ENCODE measurements at regions of chr19 and their contacts with region 1.

Region 1: GRCh38 chr19:55088543-55089341 is 13.1 kb downstream of the EPS8L1 start:
- DNase-seq: peak; percentile 71 to 81
- ATAC-seq: peak; percentile 52 to 79
- H3K4me3 ChIP-seq: no peak overlapping the region
- H3K27ac ChIP-seq: no peak overlapping the region
- H3K4me1 ChIP-seq: no peaks in the 10 kb centered on the region
- CTCF ChIP-seq: peak; percentile 93
- EP300 ChIP-seq: no peak
- POLR2A ChIP-seq: no peak
- RAD21 ChIP-seq: peak; percentile 33 to 51; a peak in 3 of 5 replicates

Region 2: DNA sequence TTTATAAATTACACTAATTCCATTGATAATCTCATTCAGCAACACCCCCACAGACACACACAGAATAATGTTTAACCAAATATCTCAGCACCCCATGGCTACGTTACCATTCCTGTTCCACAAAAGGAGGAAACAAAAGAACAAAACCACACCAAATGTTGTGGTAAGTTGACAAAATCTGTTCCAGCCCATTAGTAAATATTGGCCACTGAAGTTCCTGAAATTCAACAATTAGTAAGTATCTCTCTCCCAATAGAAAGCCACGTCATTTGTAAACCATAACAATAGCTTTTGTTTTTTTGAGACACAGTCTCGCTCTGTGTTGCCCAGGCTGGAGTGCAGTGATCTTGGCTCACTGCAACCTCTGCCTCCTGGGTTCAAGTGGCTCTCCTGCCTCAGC is 217.0 kb before region 1 on chr19:
- CTCF ChIA-PET with region 1: no interaction called
- POLR2A ChIA-PET with region 1: no interaction called
- DNase-seq: no peak
- ATAC-seq: no peak
- H3K4me3 ChIP-seq: no peak overlapping the region
- H3K27ac ChIP-seq: no peak overlapping the region
- H3K4me1 ChIP-seq: no peaks in the 10 kb centered on the region
- CTCF ChIP-seq: no peak
- EP300 ChIP-seq: no peak
- POLR2A ChIP-seq: no peak
- RAD21 ChIP-seq: no peak

Region 3: DNA sequence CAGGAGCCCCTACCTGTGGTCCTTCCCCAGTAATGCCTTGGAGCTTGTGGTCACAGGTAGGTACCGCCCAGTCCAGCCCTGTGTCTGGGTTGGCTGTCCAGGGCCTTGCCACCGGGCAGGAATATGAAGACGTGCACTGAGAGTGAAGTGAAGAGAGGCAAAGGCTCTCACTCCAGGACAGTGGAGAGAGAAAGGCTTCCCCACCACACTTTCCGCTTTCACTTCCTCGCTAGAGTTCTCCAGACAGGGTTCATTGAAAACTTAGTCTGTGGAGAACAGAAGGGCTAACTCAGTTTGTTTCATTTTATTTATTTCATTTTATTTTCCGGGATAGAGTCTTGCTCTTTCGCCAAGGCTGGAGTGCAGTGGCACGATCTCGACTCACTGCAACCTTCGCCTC is 200.5 kb before region 1 on chr19:
- CTCF ChIA-PET with region 1: no interaction called
- POLR2A ChIA-PET with region 1: no interaction called
- DNase-seq: no peak
- ATAC-seq: no peak
- H3K4me3 ChIP-seq: no peak overlapping the region
- H3K27ac ChIP-seq: no peak overlapping the region
- H3K4me1 ChIP-seq: peaks cover 2% of the 10 kb centered on the region; the same call in 1 of the 3 replicates
- CTCF ChIP-seq: no peak
- EP300 ChIP-seq: no peak
- POLR2A ChIP-seq: no peak
- RAD21 ChIP-seq: no peak

Region 4: DNA sequence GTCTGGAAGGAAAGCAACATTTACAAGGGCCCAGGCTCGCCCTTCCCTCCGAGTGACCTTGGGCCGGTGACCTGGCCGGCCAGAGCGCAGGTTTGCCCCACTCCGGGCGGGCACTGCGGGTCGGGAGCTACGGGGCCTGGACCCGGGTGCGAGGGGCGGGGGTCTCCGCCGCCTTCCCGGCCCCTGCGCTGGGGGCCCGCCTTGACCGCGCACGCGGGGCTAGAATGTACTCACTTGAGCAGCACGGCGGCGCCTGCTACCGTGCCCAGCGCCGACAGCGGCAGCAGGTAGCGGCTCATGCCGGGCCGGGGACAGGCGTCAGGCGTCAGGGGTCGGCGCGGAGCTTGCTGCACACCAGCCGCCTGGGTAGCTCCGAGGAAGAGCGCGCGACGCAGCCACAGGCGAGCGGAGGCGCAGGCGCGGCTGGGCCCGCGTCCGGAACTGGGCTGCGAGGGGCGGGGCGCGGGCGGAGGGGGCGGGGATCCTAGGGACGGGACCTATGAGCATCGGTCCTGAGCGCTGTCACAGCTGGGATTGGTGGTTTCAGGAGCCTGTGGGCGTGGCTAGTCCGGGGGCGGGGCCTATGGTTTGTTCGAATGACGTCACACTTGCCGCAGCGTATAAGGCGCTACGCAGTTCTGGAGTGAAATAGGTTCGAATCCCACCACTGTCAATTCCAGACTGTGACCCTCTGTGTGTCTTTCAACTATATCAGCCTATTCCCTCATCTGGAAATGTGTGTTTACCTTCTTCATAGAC is 25.8 kb before region 1 on chr19 and contains the start of gene RDH13:
- CTCF ChIA-PET with region 1: interaction called, 18 read pairs
- POLR2A ChIA-PET with region 1: interaction called, 3 read pairs
- DNase-seq: peak; percentile 97 to 99
- ATAC-seq: peak; percentile 95 to 99
- H3K4me3 ChIP-seq: peak within 1 kb of the TSS; percentile 95
- H3K27ac ChIP-seq: peak within 1 kb of the TSS; percentile 80 to 89
- H3K4me1 ChIP-seq: peaks cover 7% of the 10 kb centered on the region; the same call in 2 of the 3 replicates
- CTCF ChIP-seq: no peak
- EP300 ChIP-seq: no peak
- POLR2A ChIP-seq: peak; percentile 81
- RAD21 ChIP-seq: no peak
- polyA plus RNA-seq, gene RDH13: 10.6 and 10.7 TPM in 2 replicates

Region 5: GRCh38 chr19:55068950-55069855 is 19.5 kb before region 1 on chr19:
- CTCF ChIA-PET with region 1: interaction called, 77 read pairs
- POLR2A ChIA-PET with region 1: no interaction called
- DNase-seq: peak; percentile 82 to 84
- ATAC-seq: peak; percentile 78
- H3K4me3 ChIP-seq: peak overlapping the region; percentile 43
- H3K27ac ChIP-seq: peak overlapping the region; percentile 50 to 74
- H3K4me1 ChIP-seq: peaks cover 27% of the 10 kb centered on the region
- CTCF ChIP-seq: no peak
- EP300 ChIP-seq: no peak
- POLR2A ChIP-seq: no peak
- RAD21 ChIP-seq: no peak

Region 6: GRCh38 chr19:55099533-55100506 is 11.1 kb after region 1 on chr19:
- CTCF ChIA-PET with region 1: interaction called, 110 read pairs
- POLR2A ChIA-PET with region 1: no interaction called
- DNase-seq: no peak
- ATAC-seq: peak in 1 of 2 experiments; percentile 49; a peak in 3 of 6 replicates
- H3K4me3 ChIP-seq: no peak overlapping the region
- H3K27ac ChIP-seq: no peak overlapping the region
- H3K4me1 ChIP-seq: no peaks in the 10 kb centered on the region
- CTCF ChIP-seq: no peak
- EP300 ChIP-seq: no peak
- POLR2A ChIP-seq: no peak
- RAD21 ChIP-seq: peak; percentile 27 to 55; a peak in 3 of 5 replicates

Region 7: DNA sequence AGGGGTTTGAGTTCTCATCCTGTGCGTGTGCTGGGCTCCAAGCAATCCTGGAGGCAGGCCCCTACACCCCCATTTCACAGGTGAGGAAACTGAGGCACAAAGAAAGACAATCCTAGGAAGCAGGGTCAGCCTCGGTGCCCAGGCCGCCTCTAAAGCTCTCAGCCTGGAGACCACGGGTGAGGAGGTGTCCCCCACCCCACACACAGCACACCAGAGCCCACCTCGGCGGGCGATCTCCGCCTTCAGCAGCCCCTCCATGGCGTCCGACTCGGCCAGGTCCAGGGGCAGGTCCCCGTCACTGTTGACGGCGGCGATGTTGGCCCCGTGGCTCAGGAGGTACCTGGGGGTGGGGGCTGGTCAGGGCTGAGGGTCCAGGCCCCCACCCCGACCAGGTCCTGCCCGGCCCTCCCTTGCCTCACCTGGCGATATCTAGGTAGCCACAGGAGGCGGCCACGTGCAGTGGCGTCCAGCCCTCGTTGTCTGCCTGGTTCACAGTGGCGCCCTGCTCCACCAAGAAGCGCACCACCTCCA is 23.6 kb after region 1 on chr19:
- CTCF ChIA-PET with region 1: interaction called, 110 read pairs
- POLR2A ChIA-PET with region 1: interaction called, 4 read pairs
- DNase-seq: no peak
- ATAC-seq: no peak
- H3K4me3 ChIP-seq: no peak overlapping the region
- H3K27ac ChIP-seq: no peak overlapping the region
- H3K4me1 ChIP-seq: peaks cover 24% of the 10 kb centered on the region
- CTCF ChIP-seq: no peak
- EP300 ChIP-seq: no peak
- POLR2A ChIP-seq: no peak
- RAD21 ChIP-seq: no peak

Region 8: GRCh38 chr19:55117636-55118391 is 29.1 kb after region 1 on chr19 and contains the start of gene PPP1R12C:
- CTCF ChIA-PET with region 1: interaction called, 33 read pairs
- POLR2A ChIA-PET with region 1: interaction called, 4 read pairs
- DNase-seq: peak; percentile 99 to 100
- ATAC-seq: peak; percentile 90 to 95
- H3K4me3 ChIP-seq: peak within 1 kb of the TSS; percentile 64
- H3K27ac ChIP-seq: peak within 1 kb of the TSS; percentile 85 to 94
- H3K4me1 ChIP-seq: peaks cover 30% of the 10 kb centered on the region
- CTCF ChIP-seq: no peak
- EP300 ChIP-seq: no peak
- POLR2A ChIP-seq: peak; percentile 74
- RAD21 ChIP-seq: no peak
- polyA plus RNA-seq, gene PPP1R12C: 18.0 and 22.0 TPM in 2 replicates